A549 (cell line): ENCODE measurements at regions of chr12 and their contacts with region 1.

Region 1: GRCh38 chr12:50167041-50167828 is at the start of gene CERS5:
- DNase-seq: peak; percentile 94 to 99
- ATAC-seq: peak; percentile 98 to 99
- H3K4me3 ChIP-seq: peak within 1 kb of the TSS; percentile 83
- H3K27ac ChIP-seq: peak within 1 kb of the TSS; percentile 84 to 96
- H3K4me1 ChIP-seq: peaks cover 10% of the 10 kb centered on the region; the same call in 2 of the 3 replicates
- CTCF ChIP-seq: no peak
- EP300 ChIP-seq: no peak
- POLR2A ChIP-seq: peak; percentile 74
- RAD21 ChIP-seq: no peak
- polyA plus RNA-seq, gene CERS5: 56.3 and 56.6 TPM in 2 replicates

Region 2: GRCh38 chr12:50187084-50187900 is 20.1 kb after region 1 on chr12:
- CTCF ChIA-PET with region 1: interaction called, 12 read pairs
- POLR2A ChIA-PET with region 1: no interaction called
- DNase-seq: no peak
- ATAC-seq: peak in 1 of 2 experiments; percentile 48; a peak in 4 of 6 replicates
- H3K4me3 ChIP-seq: no peak overlapping the region
- H3K27ac ChIP-seq: no peak overlapping the region
- H3K4me1 ChIP-seq: no peaks in the 10 kb centered on the region
- CTCF ChIP-seq: no peak
- EP300 ChIP-seq: no peak
- POLR2A ChIP-seq: no peak
- RAD21 ChIP-seq: no peak

Region 3: DNA sequence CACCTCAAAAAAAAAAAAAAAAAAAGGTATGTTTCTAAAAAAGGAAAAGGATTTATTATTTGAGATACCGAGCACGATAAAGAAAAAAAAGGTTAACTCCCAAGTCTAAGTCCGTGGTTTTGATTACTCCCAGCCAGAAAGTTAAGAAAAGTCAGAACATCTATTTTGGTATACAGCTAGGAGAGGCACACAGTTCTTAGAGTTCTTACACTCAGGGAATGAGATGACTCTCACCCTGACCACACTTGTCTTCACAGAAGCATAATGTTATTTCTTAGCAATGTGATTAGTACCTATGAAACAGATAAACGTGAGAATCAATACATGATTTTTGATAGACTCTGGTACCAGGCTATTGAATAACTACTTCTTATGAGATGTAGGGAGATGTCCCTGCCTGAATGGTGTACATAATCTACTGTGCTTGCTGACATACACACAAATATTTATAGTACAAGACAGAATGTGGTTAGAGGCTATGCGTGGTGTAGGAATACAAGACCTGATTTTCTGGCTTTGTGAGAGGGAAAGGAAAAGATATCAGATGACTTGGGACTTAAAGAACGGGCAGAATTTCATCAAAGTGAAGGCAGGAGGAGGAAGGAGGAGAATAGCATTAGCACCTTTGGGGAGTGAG is 84.5 kb after region 1 on chr12:
- CTCF ChIA-PET with region 1: no interaction called
- POLR2A ChIA-PET with region 1: no interaction called
- DNase-seq: no peak
- ATAC-seq: no peak
- H3K4me3 ChIP-seq: no peak overlapping the region
- H3K27ac ChIP-seq: no peak overlapping the region
- H3K4me1 ChIP-seq: peaks cover 59% of the 10 kb centered on the region
- CTCF ChIP-seq: no peak
- EP300 ChIP-seq: no peak
- POLR2A ChIP-seq: no peak
- RAD21 ChIP-seq: no peak